ENCODE measurements at regions of chr22 and their contacts with region 1.

Region 1: DNA sequence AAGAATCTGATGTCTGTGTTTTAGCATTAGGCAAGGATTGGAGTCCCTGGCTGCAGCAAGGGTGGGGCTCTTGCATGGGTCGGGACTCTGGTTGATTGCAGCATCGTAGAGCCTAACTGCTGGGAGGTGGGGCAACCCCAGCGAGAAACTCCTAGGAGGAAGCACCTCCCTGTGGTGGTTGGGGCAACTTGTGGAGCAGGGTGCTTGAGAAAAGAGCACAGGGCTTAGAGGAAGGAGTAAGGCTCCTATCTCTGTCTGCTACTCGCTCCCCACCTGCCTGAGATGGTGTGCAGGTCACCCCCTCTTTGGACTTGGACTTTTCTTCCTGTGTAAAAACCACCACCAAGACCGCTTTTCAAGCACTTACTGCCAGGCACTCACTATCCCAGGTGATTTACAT is 15.6 kb downstream of the SREBF2 start:
- DNase-seq: peak; percentile 67
- ATAC-seq: peak; percentile 85

Region 2: GRCh38 chr22:41237707-41238569 is 610.5 kb before region 1 on chr22:
- intact Hi-C with region 1: loop called (anchors 5 kb)
- DNase-seq: peak; percentile 74
- ATAC-seq: peak; percentile 55

Region 3: GRCh38 chr22:42388130-42388797 is 539.8 kb after region 1 on chr22:
- intact Hi-C with region 1: no loop called
- DNase-seq: no peak
- ATAC-seq: no peak